Activated CD8-positive, alpha-beta T cell treated with anti-CD3 and anti-CD28 coated beads, Interleukin-2, amount 10 ng/mL, durations not matched to agents 7 days and 5 days (primary cell): ENCODE measurements at regions of chr3 and their contacts with region 1.

Region 1: GRCh38 chr3:131794766-131795388 is 239.9 kb downstream of the CPNE4 start:
- DNase-seq: peak; percentile 41
- ATAC-seq: peak; percentile 68
- H3K4me3 Mint-ChIP-seq: no peak overlapping the region
- H3K27ac Mint-ChIP-seq: no peak overlapping the region
- H3K4me1 Mint-ChIP-seq: peaks cover 5% of the 10 kb centered on the region
- H3K27me3 Mint-ChIP-seq: peaks cover 14% of the 10 kb centered on the region

Region 2: DNA sequence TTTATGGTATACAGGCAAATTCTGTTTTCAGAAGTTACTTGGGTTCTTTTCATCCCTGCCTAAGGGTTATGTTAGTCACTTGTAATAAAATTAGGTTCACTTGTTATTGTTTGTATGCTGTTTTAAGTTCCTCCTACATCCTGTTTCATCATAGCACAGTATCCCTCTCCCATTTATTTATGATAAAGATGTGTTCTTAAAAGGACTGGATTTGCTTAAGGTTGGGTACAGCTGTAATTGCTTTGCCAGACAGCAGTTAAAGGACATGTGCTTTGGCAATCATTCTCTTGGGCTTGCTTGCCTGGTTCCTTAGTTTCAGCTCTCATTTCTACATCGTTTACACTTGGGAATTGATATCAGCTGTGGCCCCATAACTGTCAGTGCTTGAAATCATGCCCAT is 889.3 kb before region 1 on chr3:
- CTCF ChIA-PET with region 1: no interaction called
- POLR2A ChIA-PET with region 1: no interaction called
- DNase-seq: no peak
- ATAC-seq: no peak
- H3K4me3 Mint-ChIP-seq: no peak overlapping the region
- H3K27ac Mint-ChIP-seq: no peak overlapping the region
- H3K4me1 Mint-ChIP-seq: peaks cover 45% of the 10 kb centered on the region
- H3K27me3 Mint-ChIP-seq: no peaks in the 10 kb centered on the region

Region 3: DNA sequence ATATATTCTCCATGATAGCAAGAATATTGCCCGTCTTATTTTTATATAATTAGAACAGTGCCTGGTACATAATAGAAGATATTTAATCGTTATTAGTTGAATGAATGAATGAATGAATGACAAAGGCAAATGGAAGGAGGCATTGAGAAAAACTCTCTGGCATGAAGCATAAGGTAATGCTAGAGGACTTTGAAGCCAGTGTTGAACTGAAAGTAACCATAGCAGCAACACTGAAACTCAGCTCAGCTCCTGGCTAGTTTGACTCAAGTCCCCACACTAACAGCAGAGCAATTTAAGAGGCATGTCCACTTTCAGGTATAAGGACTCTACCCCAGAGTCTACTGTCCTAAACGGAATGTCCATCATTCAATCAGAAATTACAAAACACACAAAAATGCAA is 12.9 kb after region 1 on chr3:
- CTCF ChIA-PET with region 1: no interaction called
- POLR2A ChIA-PET with region 1: no interaction called
- DNase-seq: no peak
- ATAC-seq: no peak
- H3K4me3 Mint-ChIP-seq: no peak overlapping the region
- H3K27ac Mint-ChIP-seq: no peak overlapping the region
- H3K4me1 Mint-ChIP-seq: no peaks in the 10 kb centered on the region
- H3K27me3 Mint-ChIP-seq: peaks cover 10% of the 10 kb centered on the region

Region 4: DNA sequence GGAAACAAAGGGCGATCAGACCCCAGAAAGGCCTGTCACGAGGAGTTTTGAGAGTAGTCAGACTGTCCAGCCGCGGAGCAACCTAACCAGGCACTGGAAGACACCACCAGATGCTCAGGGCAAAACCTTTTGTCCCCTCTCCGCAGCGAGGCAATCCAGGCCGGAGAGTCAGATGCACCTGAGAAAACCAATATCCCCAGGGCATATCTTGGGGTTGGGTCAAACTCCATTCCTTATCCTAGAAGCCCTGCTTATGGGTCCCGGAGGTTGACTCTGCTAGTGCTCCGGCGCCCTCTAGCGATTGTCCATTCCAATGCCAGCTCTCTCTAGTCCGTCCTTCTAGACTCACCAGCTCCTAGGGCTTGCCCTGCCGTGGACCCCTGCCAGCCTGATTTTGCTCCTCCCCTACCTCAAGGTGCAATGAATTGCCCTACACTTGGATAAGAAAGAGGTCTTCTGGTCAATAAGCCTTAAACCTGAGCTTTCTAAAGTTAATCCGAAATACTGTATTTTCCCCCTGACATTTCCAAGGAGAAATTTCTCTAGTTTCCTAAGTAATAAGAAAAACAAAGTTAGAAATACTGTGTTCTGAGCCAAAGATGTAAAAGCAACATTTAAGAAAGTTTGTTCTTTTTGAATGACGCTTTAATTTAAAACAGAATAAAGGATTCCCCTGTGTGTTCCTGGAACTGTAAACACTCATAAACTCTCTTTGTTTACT is 234.5 kb after region 1 on chr3:
- CTCF ChIA-PET with region 1: interaction called, 21 read pairs
- POLR2A ChIA-PET with region 1: no interaction called
- DNase-seq: peak; percentile 75
- ATAC-seq: peak; percentile 82
- H3K4me3 Mint-ChIP-seq: no peak overlapping the region
- H3K27ac Mint-ChIP-seq: no peak overlapping the region
- H3K4me1 Mint-ChIP-seq: peaks cover 3% of the 10 kb centered on the region
- H3K27me3 Mint-ChIP-seq: peaks cover 18% of the 10 kb centered on the region